ENCODE measurements at regions of chr22 and their contacts with region 1.

Region 1: DNA sequence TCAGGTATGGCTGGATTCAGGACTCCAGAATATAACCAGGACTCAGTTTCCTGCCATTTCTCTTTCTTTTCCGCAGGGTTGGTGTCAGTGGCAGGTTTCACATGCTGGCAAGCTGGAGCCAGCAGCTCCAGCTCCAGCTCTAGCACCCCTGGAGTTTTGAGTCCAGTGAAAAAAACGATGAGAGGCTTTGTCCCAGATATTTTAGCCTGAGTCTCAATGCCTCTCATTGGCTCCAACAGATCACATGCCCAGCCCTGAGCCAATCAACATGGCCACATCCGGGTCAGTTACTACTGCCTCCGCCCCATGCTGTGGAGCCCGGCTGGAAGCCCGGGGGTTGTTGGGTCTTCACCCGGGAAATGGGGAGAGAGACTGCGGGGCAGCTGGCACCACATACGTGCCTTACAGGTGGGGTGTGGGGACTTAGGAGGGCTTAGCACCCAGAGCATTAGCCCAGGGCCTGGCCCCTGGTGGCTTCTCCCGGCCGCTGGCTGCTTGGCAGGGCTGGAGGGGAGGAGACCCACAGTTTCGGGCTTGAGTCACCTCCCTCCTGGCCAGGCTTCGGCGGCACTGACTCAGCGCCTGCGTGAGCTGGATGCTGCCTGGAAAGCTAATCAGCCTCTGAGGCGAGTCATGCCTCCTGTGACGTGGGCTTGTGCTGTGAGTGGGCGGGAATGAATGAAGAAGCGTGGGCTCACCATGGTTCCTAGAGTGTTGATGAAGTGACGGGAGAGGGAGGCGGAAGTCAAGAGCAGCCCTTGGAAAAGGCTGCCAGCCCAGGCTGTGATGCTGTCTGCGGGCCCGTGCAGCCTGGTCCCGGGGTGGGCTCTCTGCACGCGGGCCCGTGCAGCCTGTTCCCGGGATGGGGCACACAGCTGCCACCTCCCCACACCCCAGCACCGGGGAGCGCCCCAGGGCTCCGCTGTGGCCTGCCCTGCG is 15.3 kb upstream of the MRTFA start:
- DNase-seq: peak; percentile 95 to 97
- ATAC-seq: peak; percentile 92 to 94
- H3K4me3 ChIP-seq: peak overlapping the region; percentile 63 to 83 (median 76)
- H3K27ac ChIP-seq: peak overlapping the region; percentile 94 to 99 (median 97)
- H3K4me1 ChIP-seq: peaks cover 37% of the 10 kb centered on the region in 2 donors
- H3K27me3 ChIP-seq: no peaks in the 10 kb centered on the region
- CTCF ChIP-seq: peak in 2 of 5 experiments; percentile 22 to 26
- POLR2A ChIP-seq: peak; percentile 83 to 91

Region 2: GRCh38 chr22:40044102-40044869 is 607.5 kb before region 1 on chr22:
- in situ Hi-C with region 1: no loop called
- intact Hi-C with region 1: loop called (anchors 5 kb)
- DNase-seq: peak; percentile 99
- ATAC-seq: peak; percentile 91 to 92
- H3K4me3 ChIP-seq: peak overlapping the region; percentile 72 to 86 (median 76)
- H3K27ac ChIP-seq: peak overlapping the region; percentile 91 to 98 (median 94)
- H3K4me1 ChIP-seq: peaks cover 41 to 47% of the 10 kb centered on the region in 2 donors
- H3K27me3 ChIP-seq: no peaks in the 10 kb centered on the region
- CTCF ChIP-seq: no peak
- POLR2A ChIP-seq: peak; percentile 72 to 92

Region 3: GRCh38 chr22:40276996-40277823 is 374.6 kb before region 1 on chr22:
- in situ Hi-C with region 1: no loop called
- intact Hi-C with region 1: loop called (anchors 5 kb)
- DNase-seq: peak; percentile 78 to 88
- ATAC-seq: peak; percentile 96 to 97
- H3K4me3 ChIP-seq: peak overlapping the region; percentile 43 to 57 (median 51)
- H3K27ac ChIP-seq: peak overlapping the region; percentile 86 to 92 (median 88)
- H3K4me1 ChIP-seq: peaks cover 9 to 34% of the 10 kb centered on the region in 2 donors
- H3K27me3 ChIP-seq: no peaks in the 10 kb centered on the region
- CTCF ChIP-seq: no peak
- POLR2A ChIP-seq: peak; percentile 76 to 93

Region 4: GRCh38 chr22:40509401-40510134 is 142.3 kb before region 1 on chr22:
- in situ Hi-C with region 1: no loop called
- intact Hi-C with region 1: loop called (anchors 5 kb)
- DNase-seq: peak; percentile 29
- ATAC-seq: peak; percentile 32 to 45
- H3K4me3 ChIP-seq: no peak overlapping the region
- H3K27ac ChIP-seq: peak overlapping the region; percentile 68 to 78 (median 73)
- H3K4me1 ChIP-seq: peaks cover 56 to 59% of the 10 kb centered on the region in 2 donors
- H3K27me3 ChIP-seq: no peaks in the 10 kb centered on the region
- CTCF ChIP-seq: no peak
- POLR2A ChIP-seq: no peak

Region 5: GRCh38 chr22:40636380-40637182 is 15.3 kb before region 1 on chr22 and contains the start of gene MRTFA:
- in situ Hi-C with region 1: no loop called
- intact Hi-C with region 1: loop called (anchors 1 kb)
- DNase-seq: peak; percentile 100
- ATAC-seq: peak; percentile 96
- H3K4me3 ChIP-seq: peak within 1 kb of the TSS; percentile 72 to 96 (median 75)
- H3K27ac ChIP-seq: peak within 1 kb of the TSS; percentile 90 to 96 (median 92)
- H3K4me1 ChIP-seq: peaks cover 29 to 31% of the 10 kb centered on the region in 2 donors
- H3K27me3 ChIP-seq: no peaks in the 10 kb centered on the region
- CTCF ChIP-seq: no peak
- POLR2A ChIP-seq: peak; percentile 98 to 99
- total RNA-seq, gene MRTFA: 13.7 to 31.3 (median 22.2) TPM

Region 6: GRCh38 chr22:40818747-40819598 is 167.1 kb after region 1 on chr22 and contains the start of gene SLC25A17:
- in situ Hi-C with region 1: no loop called
- intact Hi-C with region 1: loop called (anchors 5 kb)
- DNase-seq: peak; percentile 82 to 87
- ATAC-seq: peak; percentile 85 to 87
- H3K4me3 ChIP-seq: peak within 1 kb of the TSS; percentile 82 to 100 (median 96)
- H3K27ac ChIP-seq: peak within 1 kb of the TSS; percentile 83 to 97 (median 90)
- H3K4me1 ChIP-seq: peaks cover 26 to 31% of the 10 kb centered on the region in 2 donors
- H3K27me3 ChIP-seq: no peaks in the 10 kb centered on the region
- CTCF ChIP-seq: peak; percentile 39 to 57 (median 44)
- POLR2A ChIP-seq: peak; percentile 63
- total RNA-seq, gene SLC25A17: 2.6 to 12.2 (median 3.8) TPM

Region 7: DNA sequence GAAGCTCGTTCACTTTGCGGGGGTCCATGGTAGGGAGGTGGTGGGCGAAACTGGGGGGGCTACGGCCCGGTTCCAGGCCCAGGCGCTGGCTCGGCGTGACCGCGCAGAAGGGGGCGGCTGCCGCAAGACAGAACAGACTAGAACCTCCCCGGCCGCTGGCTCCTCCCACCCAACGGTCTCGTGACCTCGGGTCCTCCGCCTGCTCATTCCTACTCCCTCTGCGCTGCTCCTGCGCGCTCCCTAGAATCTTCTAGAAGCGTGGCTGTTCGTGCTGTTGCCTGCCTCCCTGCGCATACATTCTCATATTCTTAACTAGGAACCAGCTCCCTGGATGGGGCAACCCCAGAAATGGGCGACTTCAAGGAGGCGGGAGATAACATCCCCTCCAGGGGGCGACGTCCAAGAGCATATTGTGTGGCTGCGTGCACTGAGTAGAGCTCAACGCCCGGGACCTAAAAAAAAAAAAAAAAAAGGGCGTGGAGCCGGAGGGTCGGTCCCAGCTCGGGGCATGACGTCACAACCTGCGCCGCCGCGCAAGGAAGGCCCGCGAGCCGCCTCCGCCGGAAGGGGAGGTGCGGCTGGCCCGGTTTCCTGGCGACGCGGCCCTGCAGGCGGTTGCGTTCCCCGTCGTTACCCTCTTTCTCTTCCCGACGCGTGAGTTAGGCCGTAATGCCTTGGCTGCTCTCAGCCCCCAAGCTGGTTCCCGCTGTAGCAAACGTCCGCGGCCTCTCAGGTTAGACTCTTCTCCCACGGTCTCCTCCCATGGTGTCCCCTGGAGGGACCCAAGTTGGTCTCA is 204.9 kb after region 1 on chr22 and contains the starts of genes ST13 and XPNPEP3:
- in situ Hi-C with region 1: no loop called
- intact Hi-C with region 1: loop called (anchors 10 kb)
- DNase-seq: peak; percentile 98
- ATAC-seq: peak; percentile 96 to 97
- H3K4me3 ChIP-seq: peak within 1 kb of the TSS; percentile 79 to 98 (median 90)
- H3K27ac ChIP-seq: peak within 1 kb of the TSS; percentile 96 to 99 (median 98)
- H3K4me1 ChIP-seq: peaks cover 48 to 56% of the 10 kb centered on the region in 2 donors
- H3K27me3 ChIP-seq: no peaks in the 10 kb centered on the region
- CTCF ChIP-seq: peak in 4 of 5 experiments; percentile 18 to 55 (median 25)
- POLR2A ChIP-seq: peak; percentile 88
- total RNA-seq, gene ST13: 122 to 265 (median 197) TPM
- total RNA-seq, gene XPNPEP3: 3.6 to 12.4 (median 7.4) TPM

Measured in gastrocnemius medialis (tissue), 4 donors.